Uterus (tissue), 4 donors: ENCODE measurements at regions of chr6 and their contacts with region 1.

Region 1: DNA sequence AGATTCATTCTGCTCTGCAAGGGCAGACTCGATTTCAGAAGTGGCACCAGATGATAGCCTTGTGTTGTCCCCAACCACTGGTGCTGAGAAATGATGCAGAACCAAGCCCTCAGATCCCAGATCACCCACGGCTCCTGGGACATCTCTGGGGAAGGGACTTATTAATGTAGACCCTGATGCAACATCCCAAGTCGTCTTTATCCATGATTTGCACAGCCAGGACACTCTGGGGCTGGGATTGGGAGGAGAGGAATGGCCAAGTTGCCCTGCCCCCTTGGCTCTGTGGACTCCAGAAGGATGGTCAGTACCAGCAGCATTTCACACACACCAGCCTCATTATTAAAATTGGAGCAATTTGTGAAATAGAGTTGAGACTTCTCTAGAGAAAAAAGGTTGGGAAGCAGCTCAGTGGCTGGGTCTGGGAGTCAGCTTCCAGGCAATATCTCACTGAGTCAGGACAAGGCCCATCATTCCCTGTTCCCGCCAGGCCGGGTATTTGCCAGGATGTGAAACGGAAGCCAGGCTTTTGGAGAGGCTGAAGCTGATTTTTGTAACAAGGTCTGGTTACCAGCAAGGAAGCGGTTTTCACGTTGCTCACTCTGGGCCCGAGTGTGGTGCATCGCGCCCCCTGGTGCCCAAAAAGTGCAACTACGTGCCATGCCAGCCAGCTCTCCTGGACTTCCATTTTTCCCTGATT is 67.4 kb downstream of the ZBTB2 start:
- DNase-seq: peak; percentile 93
- H3K4me3 ChIP-seq: no peak overlapping the region
- H3K27ac ChIP-seq: peak overlapping the region; percentile 70 to 80
- H3K4me1 ChIP-seq: no peaks in the 10 kb centered on the region
- H3K27me3 ChIP-seq: no peaks in the 10 kb centered on the region
- CTCF ChIP-seq: peak; percentile 94 to 99 (median 98)
- POLR2A ChIP-seq: no peak

Region 2: GRCh38 chr6:150881911-150882481 is 441.9 kb before region 1 on chr6:
- intact Hi-C with region 1: no loop called
- DNase-seq: peak; percentile 41 to 54
- H3K4me3 ChIP-seq: no peak overlapping the region
- H3K27ac ChIP-seq: peak overlapping the region; percentile 28 to 72
- H3K4me1 ChIP-seq: peaks cover 0 to 8% of the 10 kb centered on the region in 2 donors
- H3K27me3 ChIP-seq: no peaks in the 10 kb centered on the region
- CTCF ChIP-seq: no peak
- POLR2A ChIP-seq: no peak

Region 3: DNA sequence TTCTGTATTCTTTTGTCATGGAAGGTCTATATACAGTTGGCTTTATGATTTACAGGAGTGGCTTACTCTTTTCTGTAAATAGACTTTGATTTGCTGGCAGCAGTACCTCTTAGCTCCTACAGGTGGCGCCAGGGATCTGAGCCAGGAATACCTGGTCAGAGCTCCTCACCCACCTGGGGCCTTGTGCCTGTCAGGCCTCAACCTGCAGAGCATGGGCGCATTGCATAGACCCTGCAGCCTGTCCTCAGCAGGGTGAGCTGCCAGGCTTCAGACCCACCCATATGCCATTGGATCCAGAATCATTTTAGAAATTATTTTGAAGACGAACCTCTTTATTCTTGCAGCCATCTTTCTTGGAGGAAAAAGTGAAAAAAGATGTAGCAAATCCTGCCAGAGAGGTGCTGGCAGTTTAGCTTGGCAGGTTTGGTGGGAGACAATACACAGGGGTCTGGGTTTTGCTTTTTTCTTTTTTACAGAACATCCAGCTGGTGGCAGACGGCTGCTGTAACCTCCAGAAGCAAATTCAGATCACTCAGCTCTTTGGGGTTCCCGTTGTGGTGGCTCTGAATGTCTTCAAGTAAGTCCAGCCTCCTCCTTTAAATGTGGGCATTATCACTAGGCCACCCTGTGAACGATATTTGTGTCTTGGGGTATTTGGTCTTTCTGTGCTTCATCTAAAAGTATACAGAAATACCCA is 309.4 kb before region 1 on chr6:
- intact Hi-C with region 1: loop called (anchors 5 kb)
- DNase-seq: peak; percentile 74 to 76
- H3K4me3 ChIP-seq: no peak overlapping the region
- H3K27ac ChIP-seq: peak overlapping the region; percentile 5 to 14
- H3K4me1 ChIP-seq: no peaks in the 10 kb centered on the region
- H3K27me3 ChIP-seq: no peaks in the 10 kb centered on the region
- CTCF ChIP-seq: peak; percentile 95 to 99 (median 97)
- POLR2A ChIP-seq: no peak

Region 4: GRCh38 chr6:151240036-151240685 is 83.8 kb before region 1 on chr6:
- intact Hi-C with region 1: loop called (anchors 10 kb)
- DNase-seq: peak; percentile 85 to 94
- H3K4me3 ChIP-seq: peak overlapping the region; percentile 76 to 90
- H3K27ac ChIP-seq: peak overlapping the region; percentile 94 to 95
- H3K4me1 ChIP-seq: no peaks in the 10 kb centered on the region
- H3K27me3 ChIP-seq: no peaks in the 10 kb centered on the region
- CTCF ChIP-seq: peak in 3 of 4 experiments; percentile 33 to 41 (median 35)
- POLR2A ChIP-seq: peak; percentile 33 to 75